ENCODE measurements at regions of chr17 and their contacts with region 1.

Region 1: GRCh38 chr17:37770631-37771518 is 26.0 kb upstream of the HNF1B start:
- DNase-seq: peak; percentile 98
- H3K4me3 Mint-ChIP-seq: no peak overlapping the region
- H3K27ac Mint-ChIP-seq: peak overlapping the region; percentile 3
- H3K4me1 Mint-ChIP-seq: peaks cover 26% of the 10 kb centered on the region
- H3K27me3 Mint-ChIP-seq: no peaks in the 10 kb centered on the region
- CTCF ChIP-seq: peak; percentile 100

Region 2: DNA sequence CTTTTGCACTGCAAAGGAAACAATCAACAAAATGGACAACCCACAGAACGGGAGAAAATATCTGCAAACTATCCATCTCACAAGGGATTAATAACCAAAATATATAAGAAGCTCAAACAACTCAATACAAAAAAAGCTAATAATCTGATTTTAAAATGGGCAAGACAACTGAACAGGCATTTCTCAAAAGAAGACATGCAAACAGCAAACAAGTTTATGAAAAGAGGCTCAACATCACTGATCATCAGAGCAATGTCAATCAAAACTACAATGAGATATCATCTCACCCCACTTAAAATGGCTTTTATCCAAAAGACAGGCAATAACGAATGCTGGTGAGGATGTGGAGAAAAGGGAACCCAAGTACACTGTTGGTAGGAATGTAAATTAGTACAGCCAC is 196.4 kb before region 1 on chr17:
- CTCF ChIA-PET with region 1: no interaction called
- intact Hi-C with region 1: no loop called
- DNase-seq: no peak
- H3K4me3 Mint-ChIP-seq: no peak overlapping the region
- H3K27ac Mint-ChIP-seq: no peak overlapping the region
- H3K4me1 Mint-ChIP-seq: no peaks in the 10 kb centered on the region
- H3K27me3 Mint-ChIP-seq: no peaks in the 10 kb centered on the region
- CTCF ChIP-seq: no peak

Region 3: GRCh38 chr17:37609170-37610040 is 161.5 kb before region 1 on chr17 and contains the start of gene SYNRG:
- CTCF ChIA-PET with region 1: interaction called, 21 read pairs
- intact Hi-C with region 1: no loop called
- DNase-seq: peak; percentile 100
- H3K4me3 Mint-ChIP-seq: peak within 1 kb of the TSS; percentile 97
- H3K27ac Mint-ChIP-seq: peak within 1 kb of the TSS; percentile 94
- H3K4me1 Mint-ChIP-seq: peaks cover 34% of the 10 kb centered on the region
- H3K27me3 Mint-ChIP-seq: no peaks in the 10 kb centered on the region
- CTCF ChIP-seq: peak; percentile 52
- total RNA-seq, gene SYNRG: 127 and 130 TPM in 2 replicates

Region 4: GRCh38 chr17:37701496-37701898 is 69.4 kb before region 1 on chr17:
- CTCF ChIA-PET with region 1: interaction called, 50 read pairs
- intact Hi-C with region 1: loop called (anchors 1 kb)
- DNase-seq: peak; percentile 93
- H3K4me3 Mint-ChIP-seq: peak overlapping the region; percentile 2
- H3K27ac Mint-ChIP-seq: peak overlapping the region; percentile 52
- H3K4me1 Mint-ChIP-seq: peaks cover 95% of the 10 kb centered on the region
- H3K27me3 Mint-ChIP-seq: no peaks in the 10 kb centered on the region
- CTCF ChIP-seq: peak; percentile 99

Region 5: DNA sequence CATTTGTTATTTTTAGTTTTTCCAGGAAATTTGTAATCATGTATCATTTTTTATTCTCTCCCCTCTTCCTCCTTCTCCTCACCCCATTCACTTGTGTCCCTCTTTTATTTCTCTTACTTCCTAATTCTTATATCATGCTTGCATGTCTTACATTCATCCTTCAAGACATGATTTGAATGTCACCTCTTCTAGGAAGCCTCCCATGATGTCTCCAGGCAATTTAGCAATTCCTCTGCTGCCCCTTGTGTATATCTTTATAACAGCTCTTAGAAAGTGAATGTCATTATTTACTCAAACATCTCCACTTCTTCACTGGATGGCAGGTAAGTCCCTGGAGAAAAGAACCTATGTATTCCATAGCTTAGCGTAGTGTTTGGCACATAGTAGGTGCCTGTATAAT is 33.8 kb before region 1 on chr17:
- CTCF ChIA-PET with region 1: interaction called, 10 read pairs
- intact Hi-C with region 1: no loop called
- DNase-seq: no peak
- H3K4me3 Mint-ChIP-seq: no peak overlapping the region
- H3K27ac Mint-ChIP-seq: peak overlapping the region; percentile 38
- H3K4me1 Mint-ChIP-seq: peaks cover 49% of the 10 kb centered on the region
- H3K27me3 Mint-ChIP-seq: no peaks in the 10 kb centered on the region
- CTCF ChIP-seq: peak; percentile 74

Region 6: GRCh38 chr17:37759014-37759637 is 11.7 kb before region 1 on chr17:
- CTCF ChIA-PET with region 1: interaction called, 9 read pairs
- intact Hi-C with region 1: loop called (anchors 1 kb)
- DNase-seq: no peak
- H3K4me3 Mint-ChIP-seq: no peak overlapping the region
- H3K27ac Mint-ChIP-seq: no peak overlapping the region
- H3K4me1 Mint-ChIP-seq: no peaks in the 10 kb centered on the region
- H3K27me3 Mint-ChIP-seq: no peaks in the 10 kb centered on the region
- CTCF ChIP-seq: no peak

Measured in Calu3 (cell line).